K562 (cell line): ENCODE measurements at regions of chr5 and their contacts with region 1.

Region 1: GRCh38 chr5:157761690-157762621 is 18.4 kb downstream of the LSM11 start:
- DNase-seq: peak; percentile 60 to 62 (median 62)
- ATAC-seq: peak; percentile 97
- H3K4me3 ChIP-seq: no peak overlapping the region
- H3K27ac ChIP-seq: no peak overlapping the region
- H3K4me1 ChIP-seq: no peaks in the 10 kb centered on the region
- H3K27me3 ChIP-seq: peaks cover 8 to 17% of the 10 kb centered on the region in 2 experiments; a peak in 3 of 5 replicates
- CTCF ChIP-seq: peak; percentile 67 to 80 (median 69); a peak in 5 of 6 replicates
- EP300 ChIP-seq: no peak
- POLR2A ChIP-seq: no peak
- RAD21 ChIP-seq: peak; percentile 67 to 83

Region 2: DNA sequence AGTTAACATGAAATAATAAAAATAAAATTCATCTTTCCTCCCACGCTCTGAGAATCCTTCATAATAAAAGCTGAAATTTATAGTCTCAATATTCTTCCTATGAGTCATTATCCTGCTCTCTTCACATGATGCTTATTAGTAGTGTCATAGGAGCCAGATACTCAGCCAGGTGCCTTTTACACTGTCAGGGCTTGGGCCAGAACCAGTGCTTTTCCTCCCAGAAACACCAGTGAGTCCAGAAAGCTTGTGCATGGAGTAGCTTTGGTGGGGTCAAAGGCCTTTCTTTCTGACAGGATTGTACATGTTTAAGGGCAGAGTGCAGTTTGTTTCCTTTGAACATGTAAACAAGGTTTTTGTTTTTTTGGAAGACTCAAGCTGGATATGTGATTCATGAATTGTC is 11.6 kb before region 1 on chr5:
- CTCF ChIA-PET with region 1: no interaction called
- POLR2A ChIA-PET with region 1: no interaction called
- in situ Hi-C with region 1: no loop called
- intact Hi-C with region 1: no loop called
- DNase-seq: no peak
- ATAC-seq: no peak
- H3K4me3 ChIP-seq: no peak overlapping the region
- H3K27ac ChIP-seq: no peak overlapping the region
- H3K4me1 ChIP-seq: peaks cover 4 to 10% of the 10 kb centered on the region in 2 experiments; a peak in 3 of 5 replicates
- H3K27me3 ChIP-seq: no peaks in the 10 kb centered on the region
- CTCF ChIP-seq: no peak
- EP300 ChIP-seq: no peak
- POLR2A ChIP-seq: no peak
- RAD21 ChIP-seq: no peak

Region 3: GRCh38 chr5:157917899-157918809 is 156.2 kb after region 1 on chr5:
- CTCF ChIA-PET with region 1: no interaction called
- POLR2A ChIA-PET with region 1: interaction called, 3 read pairs
- in situ Hi-C with region 1: no loop called
- intact Hi-C with region 1: loop called (anchors 10 kb)
- DNase-seq: peak; percentile 24 to 78 (median 32)
- ATAC-seq: peak; percentile 97
- H3K4me3 ChIP-seq: no peak overlapping the region
- H3K27ac ChIP-seq: no peak overlapping the region
- H3K4me1 ChIP-seq: peaks cover 0 to 13% of the 10 kb centered on the region in 2 experiments; a peak in 3 of 5 replicates
- H3K27me3 ChIP-seq: no peaks in the 10 kb centered on the region
- CTCF ChIP-seq: peak; percentile 63 to 71 (median 65)
- EP300 ChIP-seq: peak; percentile 17; the same call in 1 of the 2 replicates
- POLR2A ChIP-seq: no peak
- RAD21 ChIP-seq: peak; percentile 58 to 69

Region 4: DNA sequence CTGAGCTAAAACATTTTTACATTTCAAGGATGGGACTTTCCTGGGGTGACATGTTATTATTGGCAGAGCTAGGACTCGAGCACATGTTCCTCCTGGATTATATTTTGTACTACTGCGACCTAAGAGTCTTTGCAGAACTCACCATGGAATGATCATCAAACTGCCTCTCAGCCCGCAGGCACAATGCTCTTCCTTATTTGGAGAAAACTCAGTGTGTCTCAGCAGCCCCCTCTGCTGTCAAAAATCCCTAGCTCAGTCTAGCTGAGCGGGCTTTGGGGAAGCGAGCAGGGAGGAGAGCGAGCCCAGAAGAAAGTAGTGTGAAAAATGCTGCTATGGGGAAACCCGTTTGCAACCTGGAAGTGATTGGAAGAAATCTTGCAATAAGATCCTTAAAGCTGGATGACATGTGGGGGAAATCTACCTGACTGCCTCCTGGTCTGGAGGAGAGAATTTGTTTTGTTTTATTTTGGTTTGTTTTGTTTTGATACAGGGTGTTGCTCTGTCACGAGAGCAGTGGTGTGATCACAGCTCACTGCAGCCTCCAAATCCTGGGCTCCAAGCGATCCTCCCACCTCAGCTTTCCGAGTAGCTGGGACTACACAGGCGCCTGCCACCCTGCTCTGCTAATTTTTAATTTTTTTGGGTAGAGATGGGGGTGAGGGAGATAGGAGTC is 186.9 kb after region 1 on chr5:
- CTCF ChIA-PET with region 1: interaction called, 4 read pairs
- POLR2A ChIA-PET with region 1: interaction called, 3 read pairs
- in situ Hi-C with region 1: no loop called
- intact Hi-C with region 1: loop called (anchors 1 kb)
- DNase-seq: peak; percentile 32 to 91 (median 50)
- ATAC-seq: peak; percentile 99
- H3K4me3 ChIP-seq: no peak overlapping the region
- H3K27ac ChIP-seq: peak overlapping the region; percentile 20; the same call in 1 of the 3 replicates
- H3K4me1 ChIP-seq: no peaks in the 10 kb centered on the region; a peak in 3 of 5 replicates
- H3K27me3 ChIP-seq: peaks cover 4 to 5% of the 10 kb centered on the region in 2 experiments; a peak in 3 of 5 replicates
- CTCF ChIP-seq: peak; percentile 78 to 90 (median 88)
- EP300 ChIP-seq: peak; percentile 41; the same call in 1 of the 2 replicates
- POLR2A ChIP-seq: no peak
- RAD21 ChIP-seq: peak; percentile 61 to 77

Region 5: DNA sequence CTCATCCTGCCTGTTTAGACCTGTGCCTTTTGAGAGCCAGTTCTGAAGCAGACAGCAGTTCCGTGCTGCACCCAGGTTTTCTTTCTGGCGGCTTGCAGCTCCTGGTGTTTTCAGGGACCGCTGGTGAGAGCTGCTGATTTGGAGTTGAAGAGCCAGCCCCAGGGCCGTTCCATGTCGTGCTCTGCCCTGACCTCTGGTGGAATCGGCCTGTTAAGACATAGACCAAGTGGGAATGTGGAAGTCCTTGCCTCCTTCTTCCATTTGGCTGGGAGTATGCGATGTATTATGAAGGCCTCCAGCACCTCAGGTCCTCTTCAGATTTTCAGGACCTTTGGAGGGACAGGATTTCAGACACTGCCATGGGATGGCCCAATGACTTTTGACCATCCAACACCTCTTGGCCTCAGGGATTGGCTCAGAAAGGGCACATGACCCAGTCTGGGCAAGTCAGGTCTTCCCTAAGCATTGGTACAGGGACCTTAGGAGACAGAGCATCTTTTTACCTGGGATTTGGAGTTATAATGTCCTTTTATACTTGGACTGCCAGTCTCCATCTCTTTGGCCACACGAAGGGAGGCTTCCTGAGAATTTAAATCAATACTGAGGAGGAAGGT is 233.1 kb after region 1 on chr5:
- CTCF ChIA-PET with region 1: interaction called, 3 read pairs
- POLR2A ChIA-PET with region 1: no interaction called
- in situ Hi-C with region 1: no loop called
- intact Hi-C with region 1: loop called (anchors 1 kb)
- DNase-seq: peak; percentile 26 to 71 (median 47)
- ATAC-seq: peak; percentile 99
- H3K4me3 ChIP-seq: no peak overlapping the region
- H3K27ac ChIP-seq: no peak overlapping the region
- H3K4me1 ChIP-seq: no peaks in the 10 kb centered on the region
- H3K27me3 ChIP-seq: peaks cover 8 to 17% of the 10 kb centered on the region in 2 experiments; a peak in 4 of 5 replicates
- CTCF ChIP-seq: peak; percentile 76 to 81 (median 78)
- EP300 ChIP-seq: no peak
- POLR2A ChIP-seq: no peak
- RAD21 ChIP-seq: peak; percentile 80 to 84